Mammary epithelial cell (primary cell): ENCODE measurements at regions of chr4 and their contacts with region 1.

Region 1: DNA sequence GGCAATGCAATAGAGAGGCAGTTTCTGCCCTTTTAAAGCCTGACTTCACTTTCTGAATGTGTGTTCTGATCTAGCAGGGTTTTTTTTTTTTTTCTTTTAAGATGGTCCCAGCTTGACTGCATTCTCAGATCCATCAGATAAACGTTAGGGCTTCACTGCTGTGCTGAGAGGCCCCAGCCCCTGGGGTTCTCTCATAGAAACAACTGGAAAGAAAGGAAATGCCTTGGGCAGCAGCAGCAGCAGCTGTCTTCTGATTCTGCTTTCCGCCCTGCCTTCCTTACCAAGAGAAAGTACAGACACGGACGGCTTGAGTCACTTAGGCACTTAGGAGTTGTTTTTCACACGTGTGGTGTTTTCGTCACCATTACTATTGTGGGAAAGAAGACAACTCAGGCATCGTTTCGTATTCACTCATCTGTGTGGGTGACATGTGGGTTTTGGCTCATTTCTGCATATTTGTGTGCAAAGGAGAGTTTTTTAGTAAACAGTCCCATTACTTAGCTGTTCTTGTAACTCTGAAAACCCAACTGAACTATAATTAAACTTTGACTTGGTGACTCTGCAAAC is 172.0 kb downstream of the PTTG2 start:
- DNase-seq: peak; percentile 99
- H3K4me3 ChIP-seq: no peak overlapping the region
- H3K27ac ChIP-seq: peak overlapping the region; percentile 99
- H3K4me1 ChIP-seq: peaks cover 35% of the 10 kb centered on the region
- H3K27me3 ChIP-seq: no peaks in the 10 kb centered on the region
- CTCF ChIP-seq: no peak

Region 2: DNA sequence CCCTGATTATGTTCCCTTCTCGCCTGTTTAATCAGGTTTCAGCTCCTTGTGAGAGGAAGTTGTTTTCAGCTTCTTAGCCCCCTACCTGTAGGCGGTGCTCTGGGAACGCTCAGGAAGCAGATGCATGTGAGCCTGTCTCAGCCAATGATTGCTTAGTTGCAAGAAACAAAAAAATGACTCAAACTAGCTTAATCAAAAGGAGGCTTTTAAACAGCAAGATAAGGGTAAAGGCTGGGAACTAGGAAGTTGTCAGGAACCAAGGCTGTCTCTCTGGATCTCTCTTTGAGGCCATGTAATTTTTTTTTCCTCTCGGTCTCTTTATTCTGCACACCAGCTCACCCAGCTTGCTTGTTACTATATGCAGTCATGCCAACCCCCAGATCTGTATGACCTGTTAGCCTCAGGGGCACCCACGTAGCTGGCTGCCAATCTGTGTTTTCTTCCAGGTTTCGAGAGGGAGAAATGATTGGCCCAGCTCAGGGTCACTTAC is 62.9 kb before region 1 on chr4:
- CTCF ChIA-PET with region 1: no interaction called
- dilution Hi-C with region 1: no loop called
- in situ Hi-C with region 1: no loop called
- intact Hi-C with region 1: loop called (anchors 2 kb)
- DNase-seq: peak; percentile 81
- H3K4me3 ChIP-seq: no peak overlapping the region
- H3K27ac ChIP-seq: no peak overlapping the region
- H3K4me1 ChIP-seq: peaks cover 6% of the 10 kb centered on the region
- H3K27me3 ChIP-seq: no peaks in the 10 kb centered on the region
- CTCF ChIP-seq: peak; percentile 74 to 82

Region 3: GRCh38 chr4:38091636-38092035 is 40.6 kb before region 1 on chr4:
- CTCF ChIA-PET with region 1: no interaction called
- dilution Hi-C with region 1: no loop called
- in situ Hi-C with region 1: no loop called
- intact Hi-C with region 1: loop called (anchors 5 kb)
- DNase-seq: peak; percentile 57
- H3K4me3 ChIP-seq: no peak overlapping the region
- H3K27ac ChIP-seq: peak overlapping the region; percentile 26
- H3K4me1 ChIP-seq: no peaks in the 10 kb centered on the region
- H3K27me3 ChIP-seq: no peaks in the 10 kb centered on the region
- CTCF ChIP-seq: no peak

Region 4: GRCh38 chr4:38160487-38161207 is 28.5 kb after region 1 on chr4:
- CTCF ChIA-PET with region 1: no interaction called
- dilution Hi-C with region 1: no loop called
- in situ Hi-C with region 1: no loop called
- intact Hi-C with region 1: loop called (anchors 1 kb)
- DNase-seq: peak; percentile 97
- H3K4me3 ChIP-seq: no peak overlapping the region
- H3K27ac ChIP-seq: peak overlapping the region; percentile 100
- H3K4me1 ChIP-seq: peaks cover 49% of the 10 kb centered on the region
- H3K27me3 ChIP-seq: no peaks in the 10 kb centered on the region
- CTCF ChIP-seq: no peak